ENCODE measurements at regions of chr3 and their contacts with region 1.

Region 1: GRCh38 chr3:66989860-66990665 is 8.0 kb upstream of the KBTBD8 start:
- DNase-seq: peak; percentile 35
- CTCF ChIP-seq: peak; percentile 58

Region 2: DNA sequence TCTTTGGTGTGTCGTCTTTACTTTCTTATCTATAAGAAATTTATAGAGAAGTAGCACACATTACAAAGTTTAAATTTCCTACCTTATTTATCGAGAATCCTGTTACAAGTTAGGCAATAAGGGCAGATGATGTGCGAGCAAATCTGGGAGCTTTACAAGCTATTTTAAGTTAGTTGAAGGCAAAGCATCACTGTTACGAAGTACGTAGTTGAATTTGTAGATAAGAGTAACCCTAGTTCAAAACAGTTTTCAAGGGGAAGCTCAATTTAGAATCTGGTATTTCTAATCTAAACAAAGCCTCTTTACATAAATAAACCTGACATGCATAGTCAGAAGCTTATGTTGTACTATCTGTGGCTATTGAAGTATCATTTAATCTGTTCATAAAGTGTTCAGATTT is 16.4 kb after region 1 on chr3:
- CTCF ChIA-PET with region 1: interaction called, 28 read pairs
- POLR2A ChIA-PET with region 1: no interaction called
- DNase-seq: no peak
- CTCF ChIP-seq: no peak

Region 3: GRCh38 chr3:67048067-67048714 is 58.1 kb after region 1 on chr3:
- CTCF ChIA-PET with region 1: interaction called, 20 read pairs
- POLR2A ChIA-PET with region 1: no interaction called
- DNase-seq: peak; percentile 48
- CTCF ChIP-seq: no peak

Measured in GM10248 (cell line).